Transverse colon (tissue), 4 donors: ENCODE measurements at regions of chr17 and their contacts with region 1.

Region 1: GRCh38 chr17:18328643-18329204 is 13.6 kb downstream of the SMCR8 start:
- DNase-seq: no peak
- H3K4me3 ChIP-seq: no peak overlapping the region
- H3K27ac ChIP-seq: no peak overlapping the region
- H3K4me1 ChIP-seq: no peaks in the 10 kb centered on the region
- H3K27me3 ChIP-seq: no peaks in the 10 kb centered on the region
- CTCF ChIP-seq: no peak
- EP300 ChIP-seq: no peak
- POLR2A ChIP-seq: no peak

Region 2: DNA sequence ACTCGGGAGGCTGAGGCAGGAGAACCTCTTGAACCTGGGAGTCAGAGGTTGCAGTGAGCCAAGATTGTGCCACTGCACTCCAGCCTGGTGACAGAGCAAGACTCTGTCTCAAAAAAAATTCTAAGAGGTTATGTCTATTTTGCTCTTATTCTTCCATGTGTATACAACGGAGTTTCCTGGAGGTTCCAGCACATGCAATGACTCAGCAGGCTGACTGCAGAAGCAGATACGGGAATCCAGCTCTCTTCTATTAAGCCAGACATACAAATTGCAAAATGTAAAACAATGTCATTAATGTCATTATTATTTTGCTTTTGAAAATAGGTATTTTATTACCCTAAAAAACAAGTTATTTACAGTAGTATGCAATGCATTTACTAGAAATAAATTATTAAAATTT is 49.9 kb before region 1 on chr17:
- in situ Hi-C with region 1: no loop called
- intact Hi-C with region 1: loop called (anchors 2 kb)
- DNase-seq: no peak
- H3K4me3 ChIP-seq: no peak overlapping the region
- H3K27ac ChIP-seq: no peak overlapping the region
- H3K4me1 ChIP-seq: no peaks in the 10 kb centered on the region
- H3K27me3 ChIP-seq: no peaks in the 10 kb centered on the region
- CTCF ChIP-seq: no peak
- EP300 ChIP-seq: no peak
- POLR2A ChIP-seq: no peak